ENCODE measurements at regions of chr7 and their contacts with region 1.

Region 1: GRCh38 chr7:20624666-20625385 is 9.4 kb downstream of the ABCB5 start:
- DNase-seq: no peak
- H3K4me3 ChIP-seq: no peak overlapping the region
- CTCF ChIP-seq: no peak
- POLR2A ChIP-seq: no peak

Region 2: DNA sequence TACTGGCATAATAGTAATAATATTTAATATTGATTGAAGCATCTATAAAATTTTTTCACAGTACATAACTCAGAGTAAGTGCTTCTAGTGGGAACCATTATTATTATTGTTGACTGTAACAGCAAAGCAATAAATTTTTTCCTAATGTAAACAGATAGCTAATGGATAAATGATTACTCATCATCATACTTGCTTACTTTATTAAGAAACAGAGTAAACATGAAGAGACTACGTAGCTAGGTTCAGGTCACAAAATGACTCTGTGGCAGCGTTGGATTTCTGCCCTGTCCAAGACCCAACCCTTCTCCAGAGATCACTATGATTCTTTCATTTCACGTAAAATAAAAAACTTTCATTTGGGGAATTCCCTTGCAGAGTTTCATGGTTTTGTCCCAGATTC is 17.6 kb before region 1 on chr7:
- intact Hi-C with region 1: loop called (anchors 1 kb)
- DNase-seq: no peak
- H3K4me3 ChIP-seq: no peak overlapping the region
- CTCF ChIP-seq: no peak
- POLR2A ChIP-seq: no peak

Region 3: DNA sequence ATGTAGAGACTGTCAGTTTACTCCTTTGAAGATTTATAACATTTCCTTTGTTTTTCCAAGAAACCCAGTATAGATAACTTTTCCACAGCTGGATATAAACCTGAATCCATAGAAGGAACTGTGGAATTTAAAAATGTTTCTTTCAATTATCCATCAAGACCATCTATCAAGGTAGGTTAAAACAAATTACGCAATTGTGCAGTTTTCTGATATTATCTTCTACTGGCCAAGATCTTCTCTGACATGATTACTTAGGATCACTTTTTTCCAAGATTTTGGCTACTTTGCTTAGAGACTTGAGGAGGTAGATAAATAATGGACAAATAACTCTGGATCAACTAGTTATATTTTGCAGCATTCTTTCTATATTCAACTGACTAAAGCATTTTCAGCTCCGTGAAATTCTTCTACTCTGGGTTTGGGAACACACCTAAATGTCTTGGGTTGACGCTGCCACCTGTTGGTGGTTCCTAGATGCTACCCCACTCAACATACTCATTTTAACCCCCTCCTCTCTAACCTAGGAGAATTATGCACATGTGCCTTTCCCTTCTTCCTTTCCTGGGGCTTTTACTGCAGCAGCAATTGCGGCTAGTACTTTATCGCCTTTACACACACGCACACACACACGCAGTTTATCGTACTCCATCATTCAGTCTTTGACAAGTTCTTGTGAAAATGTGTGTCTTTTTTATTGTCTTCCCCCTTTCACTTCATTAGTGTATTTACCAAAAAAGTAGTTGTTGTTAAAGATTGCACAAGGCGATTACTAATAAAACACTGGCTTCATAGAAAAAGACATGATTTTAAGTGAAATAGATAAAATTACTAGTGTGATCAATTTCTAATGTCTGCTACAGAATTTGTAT is 23.3 kb after region 1 on chr7:
- intact Hi-C with region 1: no loop called
- DNase-seq: no peak
- H3K4me3 ChIP-seq: no peak overlapping the region
- CTCF ChIP-seq: no peak
- POLR2A ChIP-seq: no peak

Region 4: GRCh38 chr7:20684581-20684980 is 59.8 kb after region 1 on chr7:
- intact Hi-C with region 1: no loop called
- DNase-seq: no peak
- H3K4me3 ChIP-seq: no peak overlapping the region
- CTCF ChIP-seq: no peak
- POLR2A ChIP-seq: no peak

Region 5: GRCh38 chr7:20730611-20731010 is 105.8 kb after region 1 on chr7:
- intact Hi-C with region 1: no loop called
- DNase-seq: no peak
- H3K4me3 ChIP-seq: no peak overlapping the region
- CTCF ChIP-seq: no peak
- POLR2A ChIP-seq: no peak

Region 6: GRCh38 chr7:20744948-20745587 is 120.2 kb after region 1 on chr7:
- intact Hi-C with region 1: no loop called
- DNase-seq: no peak
- H3K4me3 ChIP-seq: no peak overlapping the region
- CTCF ChIP-seq: no peak
- POLR2A ChIP-seq: no peak

Measured in lower leg skin (tissue), 4 donors.